ENCODE measurements at regions of chr19 and their contacts with region 1.

Region 1: GRCh38 chr19:8252922-8253589 is 43.9 kb downstream of the CERS4 start:
- DNase-seq: peak; percentile 91
- ATAC-seq: peak; percentile 82
- H3K4me3 ChIP-seq: no peak overlapping the region
- H3K27ac ChIP-seq: no peak overlapping the region
- H3K4me1 ChIP-seq: no peaks in the 10 kb centered on the region
- H3K27me3 ChIP-seq: no peaks in the 10 kb centered on the region
- CTCF ChIP-seq: peak; percentile 95

Region 2: GRCh38 chr19:7943444-7944176 is 309.4 kb before region 1 on chr19 and contains the start of gene TIMM44:
- intact Hi-C with region 1: loop called (anchors 10 kb)
- DNase-seq: peak; percentile 99
- ATAC-seq: peak; percentile 99
- H3K4me3 ChIP-seq: peak within 1 kb of the TSS; percentile 92
- H3K27ac ChIP-seq: peak within 1 kb of the TSS; percentile 98
- H3K4me1 ChIP-seq: peaks cover 12% of the 10 kb centered on the region
- H3K27me3 ChIP-seq: no peaks in the 10 kb centered on the region
- CTCF ChIP-seq: no peak
- total RNA-seq, gene TIMM44: 49.8 TPM

Region 3: DNA sequence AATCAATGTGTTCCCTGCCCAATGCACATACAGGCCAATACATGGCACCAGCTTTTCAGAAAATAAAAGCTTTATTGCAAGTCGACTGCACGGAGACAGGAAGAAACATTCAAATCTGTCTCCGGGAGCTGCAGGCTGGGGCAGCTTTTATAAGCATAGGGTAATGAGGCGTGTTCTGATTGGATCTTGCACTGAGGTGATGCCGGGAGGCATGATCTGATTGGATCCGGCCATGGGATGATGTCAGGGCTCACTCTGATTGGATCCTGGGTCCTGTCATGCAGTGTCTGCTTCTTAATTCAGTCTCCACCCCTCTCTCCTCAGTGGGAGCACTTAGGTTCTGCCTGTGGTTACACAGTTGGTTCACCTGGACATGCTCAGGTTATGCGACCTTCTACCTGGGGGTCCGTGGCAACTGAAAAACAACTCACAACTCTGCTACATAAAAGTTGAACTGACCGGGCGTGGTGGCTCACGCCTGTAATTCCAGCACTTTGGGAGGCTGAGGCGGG is 91.9 kb before region 1 on chr19:
- intact Hi-C with region 1: loop called (anchors 5 kb)
- DNase-seq: no peak
- ATAC-seq: peak; percentile 67
- H3K4me3 ChIP-seq: no peak overlapping the region
- H3K27ac ChIP-seq: no peak overlapping the region
- H3K4me1 ChIP-seq: no peaks in the 10 kb centered on the region
- H3K27me3 ChIP-seq: no peaks in the 10 kb centered on the region
- CTCF ChIP-seq: no peak

Measured in upper lobe of right lung (tissue), 1 donor.